ENCODE measurements at regions of chr14 and their contacts with region 1.

Region 1: GRCh38 chr14:97177015-97177414 is 379.8 kb downstream of the VRK1 start:
- DNase-seq: peak; percentile 59
- H3K4me3 Mint-ChIP-seq: no peak overlapping the region
- H3K27ac Mint-ChIP-seq: no peak overlapping the region
- H3K4me1 Mint-ChIP-seq: peaks cover 37% of the 10 kb centered on the region
- H3K27me3 Mint-ChIP-seq: no peaks in the 10 kb centered on the region

Region 2: GRCh38 chr14:97218691-97219430 is 41.8 kb after region 1 on chr14:
- CTCF ChIA-PET with region 1: no interaction called
- intact Hi-C with region 1: loop called (anchors 2 kb)
- DNase-seq: peak; percentile 60
- H3K4me3 Mint-ChIP-seq: peak overlapping the region; percentile 72
- H3K27ac Mint-ChIP-seq: no peak overlapping the region
- H3K4me1 Mint-ChIP-seq: peaks cover 14% of the 10 kb centered on the region
- H3K27me3 Mint-ChIP-seq: peaks cover 3% of the 10 kb centered on the region

Region 3: GRCh38 chr14:97270308-97270707 is 93.3 kb after region 1 on chr14:
- CTCF ChIA-PET with region 1: no interaction called
- intact Hi-C with region 1: no loop called
- DNase-seq: no peak
- H3K4me3 Mint-ChIP-seq: no peak overlapping the region
- H3K27ac Mint-ChIP-seq: no peak overlapping the region
- H3K4me1 Mint-ChIP-seq: peaks cover 2% of the 10 kb centered on the region
- H3K27me3 Mint-ChIP-seq: peaks cover 2% of the 10 kb centered on the region

Region 4: DNA sequence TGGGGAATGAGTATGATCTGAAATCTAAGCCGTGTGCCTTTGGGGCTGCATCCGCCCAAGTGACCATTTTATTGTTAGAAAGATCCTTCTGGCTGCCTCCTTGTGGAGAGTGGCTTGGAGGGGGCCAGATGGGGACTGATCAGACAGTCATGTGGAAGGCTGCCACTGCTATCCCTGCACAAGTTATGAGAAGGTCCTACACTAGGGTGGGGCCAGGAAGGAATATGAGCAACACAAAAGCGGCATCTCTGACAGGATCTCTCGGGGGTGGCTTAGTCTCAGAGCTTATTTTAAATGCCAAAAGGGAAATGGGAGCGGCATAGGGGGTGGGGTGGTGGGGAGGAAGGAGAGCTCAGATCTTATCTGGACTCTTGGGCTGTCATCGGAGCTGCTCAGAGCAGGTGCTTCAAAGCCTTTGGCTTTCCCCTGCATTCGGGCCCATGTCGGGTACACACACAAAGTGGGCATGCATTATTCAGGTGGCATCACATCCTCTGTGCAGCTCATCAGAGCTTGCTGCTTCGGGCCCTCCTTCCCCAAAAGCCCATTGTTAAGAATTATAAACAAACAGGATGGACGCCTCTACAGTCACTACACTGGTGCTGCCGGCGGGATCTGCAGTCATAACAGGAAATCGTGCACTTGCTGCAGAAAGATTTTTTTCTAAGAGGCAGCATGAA is 425.6 kb after region 1 on chr14:
- CTCF ChIA-PET with region 1: no interaction called
- intact Hi-C with region 1: loop called (anchors 10 kb)
- DNase-seq: peak; percentile 80
- H3K4me3 Mint-ChIP-seq: no peak overlapping the region
- H3K27ac Mint-ChIP-seq: no peak overlapping the region
- H3K4me1 Mint-ChIP-seq: peaks cover 30% of the 10 kb centered on the region
- H3K27me3 Mint-ChIP-seq: no peaks in the 10 kb centered on the region